Sigmoid colon (tissue), 7 donors: ENCODE measurements at regions of chr4 and their contacts with region 1.

Region 1: GRCh38 chr4:6640292-6641163 is at the start of gene MRFAP1:
- DNase-seq: peak; percentile 96
- H3K4me3 ChIP-seq: peak within 1 kb of the TSS; percentile 71 to 85 (median 84)
- H3K27ac ChIP-seq: peak within 1 kb of the TSS; percentile 93 to 96 (median 95)
- H3K4me1 ChIP-seq: peaks cover 0 to 36% (median 30%) of the 10 kb centered on the region in 4 donors
- H3K27me3 ChIP-seq: no peaks in the 10 kb centered on the region
- CTCF ChIP-seq: no peak
- EP300 ChIP-seq: peak in 1 of 4 donors; percentile 53
- POLR2A ChIP-seq: peak; percentile 92 to 93
- total RNA-seq, gene MRFAP1: 196 to 226 (median 211) TPM

Region 2: GRCh38 chr4:6250235-6250983 is 390.1 kb before region 1 on chr4:
- intact Hi-C with region 1: no loop called
- DNase-seq: no peak
- H3K4me3 ChIP-seq: no peak overlapping the region
- H3K27ac ChIP-seq: no peak overlapping the region
- H3K4me1 ChIP-seq: peaks cover 0 to 6% (median 5%) of the 10 kb centered on the region in 4 donors
- H3K27me3 ChIP-seq: peaks cover 0 to 36% (median 20%) of the 10 kb centered on the region in 3 donors
- CTCF ChIP-seq: peak; percentile 49 to 87 (median 72)
- EP300 ChIP-seq: no peak
- POLR2A ChIP-seq: no peak

Region 3: GRCh38 chr4:6269616-6270511 is 370.7 kb before region 1 on chr4 and contains the start of gene WFS1:
- intact Hi-C with region 1: loop called (anchors 5 kb)
- DNase-seq: peak; percentile 99
- H3K4me3 ChIP-seq: peak within 1 kb of the TSS; percentile 64 to 86 (median 84)
- H3K27ac ChIP-seq: peak within 1 kb of the TSS; percentile 87 to 96 (median 91)
- H3K4me1 ChIP-seq: peaks cover 0 to 54% (median 50%) of the 10 kb centered on the region in 4 donors
- H3K27me3 ChIP-seq: no peaks in the 10 kb centered on the region
- CTCF ChIP-seq: no peak
- EP300 ChIP-seq: no peak
- POLR2A ChIP-seq: peak; percentile 69 to 82
- total RNA-seq, gene WFS1: 34.6 to 69.0 (median 47.2) TPM

Region 4: GRCh38 chr4:6658597-6659075 is 18.1 kb after region 1 on chr4:
- intact Hi-C with region 1: loop called (anchors 2 kb)
- DNase-seq: no peak
- H3K4me3 ChIP-seq: peak overlapping the region; percentile 25 to 52 (median 45)
- H3K27ac ChIP-seq: peak overlapping the region; percentile 62 to 75 (median 70)
- H3K4me1 ChIP-seq: peaks cover 0 to 15% (median 7%) of the 10 kb centered on the region in 4 donors
- H3K27me3 ChIP-seq: no peaks in the 10 kb centered on the region
- CTCF ChIP-seq: no peak
- EP300 ChIP-seq: no peak
- POLR2A ChIP-seq: no peak

Region 5: DNA sequence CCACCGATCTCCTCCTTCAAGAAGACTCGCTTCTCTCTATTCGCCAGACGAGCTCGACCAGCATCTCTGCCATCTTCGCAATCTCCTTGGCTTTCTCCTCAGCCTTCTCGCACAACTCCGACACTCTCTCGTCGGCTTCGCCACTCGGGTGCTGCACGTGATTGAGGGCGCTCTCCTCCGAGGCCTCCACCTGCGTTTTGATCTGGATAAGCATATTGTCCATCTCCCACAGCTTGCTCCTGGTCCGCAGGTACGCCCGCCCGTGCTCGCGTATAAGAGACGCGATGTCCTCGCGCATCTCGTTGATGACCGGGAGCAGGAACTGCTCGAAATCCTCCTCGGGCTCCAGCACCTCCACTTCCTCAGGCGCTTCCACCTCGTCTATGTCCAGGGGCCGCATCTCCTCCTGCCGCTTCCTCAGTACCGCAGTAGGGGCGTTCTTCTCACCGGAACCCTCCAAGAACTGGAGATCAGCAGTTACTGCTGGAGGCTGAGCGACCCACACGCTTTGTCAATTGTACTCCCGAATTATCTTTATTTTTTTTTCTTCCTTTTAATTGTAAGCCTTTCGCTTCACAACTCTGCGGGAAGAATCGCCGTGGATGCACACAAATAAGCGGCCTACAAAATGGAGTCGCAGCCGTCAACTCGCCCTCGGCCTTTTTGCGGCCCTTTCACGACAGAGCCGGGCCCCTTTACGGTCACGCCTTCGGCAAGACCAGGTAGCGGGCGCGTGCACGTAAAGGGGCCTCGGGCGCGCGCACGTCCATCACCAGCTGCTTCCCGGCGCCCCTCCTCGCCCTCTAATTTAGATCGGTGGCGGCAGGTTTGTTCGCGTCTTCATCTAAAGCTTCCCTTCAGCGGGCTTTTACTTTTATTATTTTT is 68.9 kb after region 1 on chr4 and contains the start of gene MRFAP1L1:
- intact Hi-C with region 1: loop called (anchors 2 kb)
- DNase-seq: peak; percentile 97
- H3K4me3 ChIP-seq: peak within 1 kb of the TSS; percentile 70 to 79 (median 73)
- H3K27ac ChIP-seq: peak within 1 kb of the TSS; percentile 82 to 91 (median 89)
- H3K4me1 ChIP-seq: peaks cover 0 to 54% (median 44%) of the 10 kb centered on the region in 4 donors
- H3K27me3 ChIP-seq: no peaks in the 10 kb centered on the region
- CTCF ChIP-seq: no peak
- EP300 ChIP-seq: peak in 1 of 4 donors; percentile 17
- POLR2A ChIP-seq: peak; percentile 25 to 31
- total RNA-seq, gene MRFAP1L1: 53.5 to 82.8 (median 64.8) TPM

Region 6: DNA sequence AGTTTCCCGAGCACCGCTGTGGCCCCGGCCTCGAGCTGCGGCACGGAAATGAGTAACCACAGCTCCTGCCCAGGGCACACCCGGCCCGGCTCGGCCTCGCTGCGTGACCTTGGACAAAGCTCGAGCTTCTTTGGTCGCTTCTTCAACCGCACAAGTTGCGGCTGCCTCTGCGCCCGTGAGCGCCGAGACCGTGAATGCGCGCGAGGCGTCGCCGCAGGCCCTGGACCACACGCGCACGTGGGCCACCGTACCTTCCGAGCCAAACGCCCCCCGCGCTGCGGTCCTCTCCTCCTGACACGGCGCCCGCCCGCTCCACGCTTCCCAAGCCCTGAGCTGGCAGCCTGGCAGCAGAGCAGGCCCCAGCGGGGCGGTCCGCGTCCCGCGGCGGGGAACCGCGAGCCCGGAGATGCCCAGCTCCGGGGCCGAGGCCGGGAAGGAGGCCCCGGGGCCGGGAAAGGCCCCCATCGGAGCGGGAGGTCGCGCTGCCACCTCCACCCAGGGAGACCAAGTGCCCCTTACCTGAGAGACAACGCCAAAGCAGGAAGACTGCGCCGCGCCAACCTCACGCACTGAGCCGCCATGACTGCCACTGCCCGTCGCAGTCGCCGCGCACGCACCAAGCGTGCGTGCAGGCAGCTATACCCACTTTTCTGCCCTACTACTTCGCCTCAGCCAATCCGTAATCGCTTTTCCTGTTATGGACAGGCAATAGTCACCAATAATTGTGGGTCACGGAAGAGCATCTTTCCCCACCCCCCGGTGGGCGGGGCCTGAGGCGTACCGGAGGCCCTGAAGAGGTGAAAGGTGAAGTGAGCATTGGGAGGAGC is 427.1 kb after region 1 on chr4 and contains the start of gene GRPEL1:
- intact Hi-C with region 1: loop called (anchors 10 kb)
- DNase-seq: peak; percentile 100
- H3K4me3 ChIP-seq: peak within 1 kb of the TSS; percentile 56 to 99 (median 90)
- H3K27ac ChIP-seq: peak within 1 kb of the TSS; percentile 88 to 95 (median 92)
- H3K4me1 ChIP-seq: peaks cover 0 to 39% (median 28%) of the 10 kb centered on the region in 4 donors
- H3K27me3 ChIP-seq: no peaks in the 10 kb centered on the region
- CTCF ChIP-seq: no peak
- EP300 ChIP-seq: no peak
- POLR2A ChIP-seq: peak; percentile 93 to 95
- total RNA-seq, gene GRPEL1: 7.5 to 23.2 (median 15.0) TPM